ENCODE measurements at regions of chr4 and their contacts with region 1.

Region 1: GRCh38 chr4:145930592-145930991 is 8.0 kb downstream of the ZNF827 start:
- DNase-seq: peak; percentile 20
- H3K4me3 ChIP-seq: no peak overlapping the region
- H3K27ac ChIP-seq: no peak overlapping the region
- H3K4me1 ChIP-seq: peaks cover 57% of the 10 kb centered on the region
- CTCF ChIP-seq: no peak

Region 2: GRCh38 chr4:145920205-145920604 is 10.4 kb before region 1 on chr4:
- CTCF ChIA-PET with region 1: interaction called, 4 read pairs
- POLR2A ChIA-PET with region 1: interaction called, 16 read pairs
- intact Hi-C with region 1: no loop called
- DNase-seq: no peak
- H3K4me3 ChIP-seq: no peak overlapping the region
- H3K27ac ChIP-seq: no peak overlapping the region
- H3K4me1 ChIP-seq: no peaks in the 10 kb centered on the region
- CTCF ChIP-seq: no peak

Region 3: GRCh38 chr4:146134761-146135445 is 204.3 kb after region 1 on chr4:
- CTCF ChIA-PET with region 1: no interaction called
- POLR2A ChIA-PET with region 1: interaction called, 10 read pairs
- intact Hi-C with region 1: no loop called
- DNase-seq: no peak
- H3K4me3 ChIP-seq: no peak overlapping the region
- H3K27ac ChIP-seq: no peak overlapping the region
- H3K4me1 ChIP-seq: peaks cover 6% of the 10 kb centered on the region
- CTCF ChIP-seq: no peak